CD4-positive, alpha-beta memory T cell (primary cell): ENCODE measurements at regions of chr19 and their contacts with region 1.

Region 1: GRCh38 chr19:14031719-14032480 is at the start of gene IL27RA:
- DNase-seq: peak; percentile 84 to 88 (median 87)
- H3K4me3 ChIP-seq: peak within 1 kb of the TSS; percentile 70 to 97
- H3K4me3 Mint-ChIP-seq: peak within 1 kb of the TSS; percentile 89 to 97 (median 94)
- H3K27ac ChIP-seq: peak within 1 kb of the TSS; percentile 96
- H3K27ac Mint-ChIP-seq: peak within 1 kb of the TSS; percentile 93 to 99 (median 98)
- H3K4me1 ChIP-seq: peaks cover 30% of the 10 kb centered on the region
- H3K4me1 Mint-ChIP-seq: peaks cover 23 to 56% (median 37%) of the 10 kb centered on the region in 4 donors
- H3K27me3 ChIP-seq: no peaks in the 10 kb centered on the region
- H3K27me3 Mint-ChIP-seq: no peaks in the 10 kb centered on the region
- total RNA-seq, gene IL27RA: 74.3 to 76.2 TPM

Region 2: DNA sequence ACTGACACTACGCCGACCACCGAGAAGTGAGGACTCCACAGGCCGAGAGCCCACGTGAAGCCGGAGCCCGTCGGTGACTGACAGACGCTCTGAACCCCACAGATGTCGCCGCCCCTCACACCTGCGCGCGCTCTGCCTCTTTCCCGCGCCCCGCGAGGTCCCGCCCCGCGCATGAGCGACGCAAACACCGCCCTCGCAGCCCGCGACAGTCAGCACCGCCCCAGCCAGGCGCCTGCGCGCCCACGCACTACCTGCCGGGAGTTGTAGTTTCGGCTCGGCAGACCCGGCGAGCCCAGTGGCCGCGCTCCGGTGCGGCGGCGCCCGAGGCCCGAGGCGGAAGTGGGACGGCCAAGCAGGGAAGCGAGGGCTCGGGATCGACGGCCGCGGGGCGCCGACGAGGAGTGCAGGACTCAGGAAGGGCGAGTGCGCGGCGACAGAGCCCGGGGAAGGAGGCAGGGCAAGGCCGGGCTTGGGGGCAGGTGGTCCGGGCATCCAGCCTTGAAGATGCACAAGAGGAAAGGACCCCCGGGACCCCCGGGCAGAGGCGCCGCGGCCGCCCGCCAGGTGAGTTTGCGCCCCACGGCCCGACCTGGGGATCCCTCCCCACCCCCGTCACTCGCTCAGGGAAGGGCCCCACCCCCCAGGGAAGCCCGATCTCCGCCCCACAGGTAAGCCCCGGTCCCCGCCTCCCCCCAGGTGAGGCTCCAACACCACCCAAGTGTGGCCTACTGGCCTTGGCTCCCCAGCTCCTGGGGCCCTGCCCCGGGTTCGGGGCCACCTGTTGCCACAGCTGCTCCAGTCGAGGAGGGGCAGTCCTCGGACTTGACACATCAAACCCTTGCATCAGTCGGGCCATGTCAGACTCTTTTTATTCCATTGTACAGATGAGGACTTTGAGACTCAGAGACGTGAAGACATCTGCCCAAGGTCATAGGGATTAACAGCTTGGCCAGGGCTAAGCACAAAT is 125.7 kb before region 1 on chr19 and contains the starts of genes BRME1 and CC2D1A:
- CTCF ChIA-PET with region 1: no interaction called
- POLR2A ChIA-PET with region 1: interaction called, 24 read pairs
- intact Hi-C with region 1: loop called (anchors 2 kb)
- DNase-seq: peak; percentile 91 to 92 (median 92)
- H3K4me3 ChIP-seq: peak within 1 kb of the TSS; percentile 34 to 79
- H3K4me3 Mint-ChIP-seq: peak within 1 kb of the TSS; percentile 82 to 93 (median 88)
- H3K27ac ChIP-seq: peak within 1 kb of the TSS; percentile 77
- H3K27ac Mint-ChIP-seq: peak within 1 kb of the TSS; percentile 73 to 98 (median 94)
- H3K4me1 ChIP-seq: peaks cover 15% of the 10 kb centered on the region
- H3K4me1 Mint-ChIP-seq: peaks cover 10 to 21% (median 13%) of the 10 kb centered on the region in 4 donors
- H3K27me3 ChIP-seq: no peaks in the 10 kb centered on the region
- H3K27me3 Mint-ChIP-seq: no peaks in the 10 kb centered on the region
- total RNA-seq, gene BRME1: 3.1 to 3.8 TPM
- total RNA-seq, gene CC2D1A: 32.9 to 37.1 TPM

Region 3: DNA sequence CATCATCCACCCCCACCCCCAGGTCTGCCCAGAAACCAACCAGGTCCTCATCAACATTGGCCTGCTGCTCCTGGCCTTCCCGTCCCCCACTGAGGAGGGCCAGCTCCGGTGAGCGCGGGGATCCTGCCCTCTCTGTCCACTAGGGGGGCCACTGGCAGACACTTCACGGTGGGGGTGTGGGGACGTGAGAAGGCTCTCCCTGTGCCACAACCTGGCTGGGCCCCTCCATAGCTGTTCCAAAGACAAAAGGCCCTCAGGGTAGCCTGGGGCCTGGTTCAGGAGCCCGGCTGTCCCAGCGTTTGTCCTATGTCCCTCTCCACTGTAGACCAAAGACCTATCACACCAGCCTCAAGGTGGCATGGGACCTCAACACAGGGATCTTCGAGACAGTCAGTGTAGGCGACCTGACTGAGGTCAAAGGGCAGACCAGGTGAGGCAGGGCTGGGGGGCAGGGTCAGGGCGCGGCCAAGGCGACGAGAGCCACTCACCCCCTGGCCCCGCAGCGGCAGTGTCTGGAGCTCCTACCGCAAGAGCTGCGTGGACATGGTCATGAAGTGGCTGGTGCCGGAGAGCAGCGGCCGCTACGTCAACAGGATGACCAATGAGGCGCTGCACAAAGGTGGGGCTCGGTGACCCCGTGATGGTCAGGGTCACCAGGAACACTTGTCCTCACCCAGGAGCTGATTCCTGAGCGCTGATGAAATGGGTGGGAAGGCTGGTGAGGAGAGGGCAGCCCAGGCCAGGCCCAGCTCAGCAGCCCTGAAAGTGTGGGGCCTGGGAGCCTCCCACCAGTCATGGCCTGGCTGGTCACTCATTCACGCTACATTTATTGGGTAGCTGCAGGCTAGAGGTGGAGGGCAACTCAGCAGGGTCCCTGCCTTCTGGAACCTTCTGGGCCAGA is 71.7 kb before region 1 on chr19:
- CTCF ChIA-PET with region 1: interaction called, 5 read pairs
- POLR2A ChIA-PET with region 1: interaction called, 11 read pairs
- intact Hi-C with region 1: no loop called
- DNase-seq: no peak
- H3K4me3 ChIP-seq: no peak overlapping the region
- H3K4me3 Mint-ChIP-seq: no peak overlapping the region
- H3K27ac ChIP-seq: no peak overlapping the region
- H3K27ac Mint-ChIP-seq: peak overlapping the region in 1 of 7 donors; percentile 68
- H3K4me1 ChIP-seq: no peaks in the 10 kb centered on the region
- H3K4me1 Mint-ChIP-seq: peaks cover 0 to 3% (median 0%) of the 10 kb centered on the region in 4 donors
- H3K27me3 ChIP-seq: no peaks in the 10 kb centered on the region
- H3K27me3 Mint-ChIP-seq: no peaks in the 10 kb centered on the region

Region 4: GRCh38 chr19:13986348-13986904 is 45.5 kb before region 1 on chr19:
- CTCF ChIA-PET with region 1: interaction called, 5 read pairs
- POLR2A ChIA-PET with region 1: interaction called, 117 read pairs
- intact Hi-C with region 1: loop called (anchors 1 kb)
- DNase-seq: peak; percentile 96 to 100 (median 98)
- H3K4me3 ChIP-seq: peak overlapping the region; percentile 43 to 49
- H3K4me3 Mint-ChIP-seq: peak overlapping the region; percentile 69 to 93 (median 74)
- H3K27ac ChIP-seq: peak overlapping the region; percentile 95
- H3K27ac Mint-ChIP-seq: peak overlapping the region; percentile 95 to 100 (median 98)
- H3K4me1 ChIP-seq: peaks cover 84% of the 10 kb centered on the region
- H3K4me1 Mint-ChIP-seq: peaks cover 35 to 93% (median 65%) of the 10 kb centered on the region in 4 donors
- H3K27me3 ChIP-seq: no peaks in the 10 kb centered on the region
- H3K27me3 Mint-ChIP-seq: no peaks in the 10 kb centered on the region

Region 5: DNA sequence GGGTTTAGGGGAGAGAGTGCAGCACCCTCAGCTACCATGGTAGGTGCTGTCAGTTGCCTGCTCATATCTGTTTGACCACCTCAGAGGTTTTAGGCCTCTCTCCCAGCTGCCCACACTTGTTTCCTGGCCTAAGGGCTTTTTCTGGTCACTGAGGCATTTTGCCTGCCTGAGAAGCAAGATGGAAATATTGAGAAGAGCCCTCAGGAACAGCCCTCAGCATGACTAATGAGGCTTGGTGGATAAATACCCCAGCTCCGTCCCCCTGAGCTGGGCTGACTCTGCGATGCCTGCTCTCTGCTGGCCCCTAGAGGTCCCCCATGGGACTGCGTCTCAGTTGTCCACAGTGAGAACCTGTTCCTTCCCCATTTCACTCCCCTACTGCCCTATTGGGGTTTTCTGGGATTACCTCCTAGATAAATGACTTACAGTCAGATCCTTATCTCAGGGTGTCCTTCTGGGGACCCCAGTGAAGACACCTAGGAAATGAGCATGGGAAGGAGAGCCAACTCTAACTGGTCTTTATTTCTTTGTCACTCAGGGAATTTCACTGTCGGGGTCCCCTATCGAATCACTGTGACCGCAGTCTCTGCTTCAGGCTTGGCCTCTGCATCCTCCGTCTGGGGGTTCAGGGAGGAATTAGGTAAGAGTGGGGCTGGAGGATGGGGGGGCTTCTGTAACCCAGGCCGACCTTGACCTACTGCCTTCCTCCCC is 16.7 kb after region 1 on chr19:
- CTCF ChIA-PET with region 1: interaction called, 17 read pairs
- POLR2A ChIA-PET with region 1: interaction called, 18 read pairs
- intact Hi-C with region 1: no loop called
- DNase-seq: peak; percentile 63 to 73 (median 68)
- H3K4me3 ChIP-seq: no peak overlapping the region
- H3K4me3 Mint-ChIP-seq: no peak overlapping the region
- H3K27ac ChIP-seq: peak overlapping the region; percentile 39
- H3K27ac Mint-ChIP-seq: peak overlapping the region; percentile 26 to 85 (median 42)
- H3K4me1 ChIP-seq: peaks cover 5% of the 10 kb centered on the region
- H3K4me1 Mint-ChIP-seq: peaks cover 2 to 5% (median 3%) of the 10 kb centered on the region in 4 donors
- H3K27me3 ChIP-seq: no peaks in the 10 kb centered on the region
- H3K27me3 Mint-ChIP-seq: no peaks in the 10 kb centered on the region

Region 6: DNA sequence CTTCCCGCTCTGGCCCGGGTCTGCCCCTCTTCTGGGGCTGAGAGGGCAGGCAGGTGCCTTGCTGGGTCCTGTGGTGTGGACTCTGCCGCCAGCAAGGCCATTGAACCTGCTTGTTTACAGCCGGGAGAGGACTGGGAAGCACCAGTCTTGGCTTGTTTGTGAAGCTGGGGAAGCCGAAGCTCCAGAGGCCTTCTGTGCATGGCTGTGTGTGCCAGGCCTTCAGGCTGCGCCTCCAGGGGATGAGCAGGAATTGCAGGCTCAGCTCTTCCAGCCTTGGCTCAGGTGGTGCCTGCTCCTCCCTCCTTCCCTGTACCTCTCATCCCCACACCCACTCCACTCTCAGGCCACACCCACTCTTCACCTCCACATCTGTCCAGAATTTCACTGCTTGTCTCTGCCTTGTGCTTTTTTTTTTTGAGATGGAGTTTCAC is 522.5 kb after region 1 on chr19:
- CTCF ChIA-PET with region 1: no interaction called
- POLR2A ChIA-PET with region 1: no interaction called
- intact Hi-C with region 1: no loop called
- DNase-seq: no peak
- H3K4me3 ChIP-seq: no peak overlapping the region
- H3K4me3 Mint-ChIP-seq: no peak overlapping the region
- H3K27ac ChIP-seq: no peak overlapping the region
- H3K27ac Mint-ChIP-seq: peak overlapping the region in 4 of 7 donors; percentile 40 to 87 (median 58)
- H3K4me1 ChIP-seq: peaks cover 61% of the 10 kb centered on the region
- H3K4me1 Mint-ChIP-seq: peaks cover 31 to 78% (median 42%) of the 10 kb centered on the region in 4 donors
- H3K27me3 ChIP-seq: no peaks in the 10 kb centered on the region
- H3K27me3 Mint-ChIP-seq: no peaks in the 10 kb centered on the region